GM18951 (cell line): ENCODE measurements at regions of chr2 and their contacts with region 1.

Region 1: GRCh38 chr2:152161598-152161997 is 14.0 kb downstream of the STAM2 start:
- POLR2A ChIP-seq: no peak

Region 2: GRCh38 chr2:152055366-152056108 is 106.1 kb before region 1 on chr2:
- in situ Hi-C with region 1: loop called (anchors 5 kb)
- POLR2A ChIP-seq: no peak

Region 3: DNA sequence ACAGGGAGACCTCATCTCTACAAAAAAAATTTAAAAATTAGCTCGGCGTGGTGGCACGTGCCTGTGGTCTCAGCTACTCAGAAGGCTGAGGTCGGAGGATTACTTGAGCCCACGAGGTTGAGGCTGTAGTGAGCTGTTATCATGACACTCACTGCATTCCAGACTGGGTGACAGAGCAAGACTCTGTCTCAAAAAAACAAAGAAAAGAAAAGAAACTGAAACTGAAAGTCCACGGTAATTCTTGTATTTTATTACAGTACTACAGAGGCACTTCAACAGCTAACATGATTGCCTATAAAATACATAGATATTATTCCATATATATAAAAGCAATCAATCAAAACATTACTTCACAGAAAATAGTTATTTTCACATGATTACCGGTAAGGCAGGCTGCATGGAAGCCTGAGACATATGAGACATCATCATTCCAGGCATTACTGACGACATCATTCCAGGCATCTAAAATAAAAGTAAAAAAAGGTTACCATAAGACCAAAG is 532.6 kb after region 1 on chr2:
- in situ Hi-C with region 1: no loop called
- POLR2A ChIP-seq: no peak